ENCODE measurements at regions of chr2 and their contacts with region 1.

Region 1: GRCh38 chr2:33210626-33211025 is 263.9 kb downstream of the LTBP1 start:
- DNase-seq: peak; percentile 93
- H3K4me3 Mint-ChIP-seq: peak overlapping the region; percentile 0
- H3K27ac Mint-ChIP-seq: peak overlapping the region; percentile 80
- H3K4me1 Mint-ChIP-seq: peaks cover 53% of the 10 kb centered on the region
- H3K27me3 Mint-ChIP-seq: no peaks in the 10 kb centered on the region
- CTCF ChIP-seq: no peak

Region 2: GRCh38 chr2:33069894-33070651 is 140.6 kb before region 1 on chr2:
- CTCF ChIA-PET with region 1: interaction called, 4 read pairs
- POLR2A ChIA-PET with region 1: interaction called, 6 read pairs
- intact Hi-C with region 1: loop called (anchors 10 kb)
- DNase-seq: peak; percentile 98
- H3K4me3 Mint-ChIP-seq: peak overlapping the region; percentile 62
- H3K27ac Mint-ChIP-seq: peak overlapping the region; percentile 91
- H3K4me1 Mint-ChIP-seq: peaks cover 38% of the 10 kb centered on the region
- H3K27me3 Mint-ChIP-seq: no peaks in the 10 kb centered on the region
- CTCF ChIP-seq: no peak

Region 3: DNA sequence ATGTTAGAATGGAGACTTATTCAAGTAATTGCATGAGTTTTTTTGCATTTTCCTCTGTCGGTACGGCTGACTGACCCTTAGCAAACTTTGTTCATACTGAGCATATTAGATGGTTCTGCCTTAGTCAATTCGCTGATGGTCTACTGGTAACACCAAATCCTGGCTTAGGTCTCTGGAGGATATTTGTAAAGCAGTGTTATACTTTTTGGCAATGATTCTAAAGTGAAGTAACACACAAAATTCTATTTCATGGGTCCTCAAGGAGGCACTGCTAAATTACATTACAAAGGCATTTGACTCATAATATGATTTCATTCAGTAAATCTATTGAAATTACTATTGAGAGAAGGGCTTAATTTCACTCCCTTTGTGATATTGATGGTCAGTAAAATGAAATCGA is 19.0 kb after region 1 on chr2:
- CTCF ChIA-PET with region 1: interaction called, 3 read pairs
- POLR2A ChIA-PET with region 1: interaction called, 10 read pairs
- intact Hi-C with region 1: no loop called
- DNase-seq: no peak
- H3K4me3 Mint-ChIP-seq: no peak overlapping the region
- H3K27ac Mint-ChIP-seq: no peak overlapping the region
- H3K4me1 Mint-ChIP-seq: peaks cover 7% of the 10 kb centered on the region
- H3K27me3 Mint-ChIP-seq: no peaks in the 10 kb centered on the region
- CTCF ChIP-seq: no peak

Region 4: DNA sequence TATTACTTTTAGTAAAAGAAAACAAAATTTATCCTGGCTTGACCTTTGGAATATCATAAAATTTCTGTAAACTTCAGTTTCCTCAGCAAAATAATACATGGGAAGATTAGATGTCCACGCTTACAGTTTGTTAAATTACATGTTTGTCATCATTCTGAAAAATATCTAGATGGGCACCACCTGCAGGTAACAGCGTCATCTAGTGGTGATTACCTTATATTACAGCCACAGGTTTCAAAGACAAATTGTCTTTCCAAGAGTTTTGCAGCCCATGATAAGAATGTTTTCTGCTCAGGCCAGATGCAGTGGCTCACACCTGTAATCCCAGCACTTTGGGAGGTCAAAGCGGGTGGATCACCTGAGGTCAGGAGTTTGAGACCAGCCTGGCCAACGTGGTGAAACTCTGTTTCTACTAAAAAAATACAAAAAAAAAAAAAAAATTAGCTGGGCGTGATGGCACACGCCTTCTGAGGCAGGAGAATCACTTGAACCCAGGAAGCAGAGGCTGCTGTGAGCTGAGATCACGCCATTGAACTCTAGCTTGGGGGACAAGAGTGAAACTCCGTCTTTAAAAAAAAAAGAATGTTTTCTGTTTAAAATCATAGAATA is 169.5 kb after region 1 on chr2:
- CTCF ChIA-PET with region 1: no interaction called
- POLR2A ChIA-PET with region 1: no interaction called
- intact Hi-C with region 1: no loop called
- DNase-seq: peak; percentile 18
- H3K4me3 Mint-ChIP-seq: no peak overlapping the region
- H3K27ac Mint-ChIP-seq: no peak overlapping the region
- H3K4me1 Mint-ChIP-seq: no peaks in the 10 kb centered on the region
- H3K27me3 Mint-ChIP-seq: no peaks in the 10 kb centered on the region
- CTCF ChIP-seq: peak; percentile 82

Measured in MCF 10A (cell line).